ENCODE measurements at regions of chr3 and their contacts with region 1.

Region 1: DNA sequence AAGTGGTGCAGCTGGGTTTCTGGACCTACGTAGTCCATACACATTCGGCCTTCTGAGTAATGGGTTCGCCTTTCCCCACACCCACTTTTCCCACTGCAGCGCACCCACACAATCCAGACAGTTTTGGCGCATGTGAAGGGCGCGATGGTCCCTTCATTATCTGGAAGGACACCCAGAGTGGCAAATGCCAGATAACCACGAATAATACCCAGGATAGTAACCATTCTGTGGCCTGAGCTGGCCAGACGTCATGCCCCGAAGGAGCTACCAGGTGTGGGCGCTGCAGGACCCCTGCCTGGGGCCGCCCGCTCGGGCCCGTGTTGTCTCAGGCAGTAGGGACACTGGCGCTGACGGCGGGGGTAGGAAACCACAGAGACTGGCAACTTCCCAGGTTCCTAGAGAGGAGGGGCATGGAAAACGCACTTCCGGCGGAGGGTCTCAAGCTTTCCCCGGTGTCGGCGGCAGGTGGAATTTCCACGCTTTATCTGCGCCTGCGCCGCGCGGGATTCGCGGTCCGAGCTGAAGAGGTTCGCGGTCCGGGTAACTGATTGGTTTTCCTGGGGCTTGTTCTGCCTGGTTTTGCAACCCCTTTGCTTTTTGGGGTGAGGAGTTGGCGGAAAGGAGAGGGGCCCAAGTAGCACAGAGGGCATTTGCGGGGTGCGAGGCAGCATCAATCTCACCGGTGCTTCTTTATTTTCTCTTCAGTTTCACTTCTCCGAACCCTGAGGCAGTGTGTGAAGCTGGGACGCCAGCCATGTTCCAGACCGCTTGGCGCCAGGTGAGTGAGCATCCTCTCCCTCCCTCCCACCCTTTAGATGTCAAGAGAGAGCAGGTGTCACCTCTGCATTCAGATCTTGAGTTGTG is at the start of gene ZNF620:
- DNase-seq: peak; percentile 41 to 78
- ATAC-seq: peak; percentile 65 to 91
- H3K4me3 ChIP-seq: peak within 1 kb of the TSS; percentile 64 to 76 (median 70)
- H3K27ac ChIP-seq: peak within 1 kb of the TSS; percentile 77 to 86 (median 82)
- H3K4me1 ChIP-seq: peaks cover 10 to 13% of the 10 kb centered on the region in 2 donors
- H3K27me3 ChIP-seq: no peaks in the 10 kb centered on the region
- CTCF ChIP-seq: peak in 2 of 5 experiments; percentile 21 to 45
- POLR2A ChIP-seq: peak; percentile 32 to 48
- total RNA-seq, gene ZNF620: 0.33 to 4.2 (median 1.9) TPM

Region 2: GRCh38 chr3:40476478-40477470 is 29.1 kb before region 1 on chr3 and contains the start of gene ZNF619:
- in situ Hi-C with region 1: no loop called
- intact Hi-C with region 1: loop called (anchors 2 kb)
- DNase-seq: peak; percentile 52 to 76
- ATAC-seq: peak; percentile 91 to 95
- H3K4me3 ChIP-seq: peak within 1 kb of the TSS; percentile 72 to 98 (median 88)
- H3K27ac ChIP-seq: peak within 1 kb of the TSS; percentile 77 to 90 (median 80)
- H3K4me1 ChIP-seq: peaks cover 4 to 6% of the 10 kb centered on the region in 2 donors
- H3K27me3 ChIP-seq: no peaks in the 10 kb centered on the region
- CTCF ChIP-seq: no peak
- POLR2A ChIP-seq: peak in 1 of 2 donors; percentile 17
- total RNA-seq, gene ZNF619: 1.9 to 7.2 (median 2.7) TPM